PC-3 (cell line): ENCODE measurements at regions of chr15 and their contacts with region 1.

Region 1: DNA sequence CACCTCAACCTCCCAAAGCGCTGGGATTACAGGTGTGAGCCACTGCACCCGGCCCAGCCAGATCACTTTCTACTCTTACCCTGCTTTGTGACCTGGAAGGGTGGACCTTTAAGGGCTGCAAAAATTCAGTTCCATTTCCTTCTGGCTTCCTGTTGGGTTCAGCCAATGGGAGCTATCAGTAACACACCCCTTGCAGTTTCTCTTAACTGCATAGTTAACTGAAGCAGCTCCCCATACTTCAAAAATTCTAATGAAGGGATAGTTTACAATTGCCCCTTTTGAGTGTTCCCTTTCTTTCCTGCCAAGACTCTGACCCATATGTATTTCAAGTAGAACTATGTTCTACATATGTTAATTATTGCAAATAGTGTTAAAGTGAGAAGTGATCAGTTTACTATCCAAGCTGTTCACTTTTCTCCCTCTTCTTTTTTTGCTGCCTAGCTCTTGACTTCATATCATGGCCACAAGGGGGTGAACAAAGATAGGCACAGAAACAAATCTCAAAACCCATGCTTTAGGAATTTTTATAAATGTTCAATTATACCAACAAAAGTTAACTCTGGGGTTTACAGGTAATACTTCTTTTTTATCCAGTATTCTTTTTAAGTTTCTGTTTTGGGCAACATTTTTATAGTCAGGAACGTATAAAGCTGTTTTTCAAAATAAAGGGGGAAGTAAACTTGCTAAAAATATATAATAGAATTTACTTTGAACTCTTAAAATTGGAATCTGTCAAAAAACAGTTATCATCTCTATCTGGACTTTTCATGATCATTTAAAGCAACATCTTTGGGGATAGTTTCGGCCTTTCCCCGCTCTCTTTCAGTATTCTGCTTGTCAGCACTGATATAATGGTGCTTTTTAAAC is 8.1 kb downstream of the PGBD4 start:
- DNase-seq: peak; percentile 63
- ATAC-seq: peak; percentile 78
- H3K4me3 ChIP-seq: no peak overlapping the region
- H3K27ac ChIP-seq: no peak overlapping the region
- H3K4me1 ChIP-seq: no peaks in the 10 kb centered on the region
- H3K27me3 ChIP-seq: no peaks in the 10 kb centered on the region
- CTCF ChIP-seq: peak; percentile 90

Region 2: GRCh38 chr15:34056936-34057335 is 53.1 kb before region 1 on chr15:
- CTCF ChIA-PET with region 1: no interaction called
- POLR2A ChIA-PET with region 1: no interaction called
- intact Hi-C with region 1: loop called (anchors 1 kb)
- DNase-seq: no peak
- ATAC-seq: no peak
- H3K4me3 ChIP-seq: no peak overlapping the region
- H3K27ac ChIP-seq: no peak overlapping the region
- H3K4me1 ChIP-seq: no peaks in the 10 kb centered on the region
- H3K27me3 ChIP-seq: no peaks in the 10 kb centered on the region
- CTCF ChIP-seq: no peak

Region 3: DNA sequence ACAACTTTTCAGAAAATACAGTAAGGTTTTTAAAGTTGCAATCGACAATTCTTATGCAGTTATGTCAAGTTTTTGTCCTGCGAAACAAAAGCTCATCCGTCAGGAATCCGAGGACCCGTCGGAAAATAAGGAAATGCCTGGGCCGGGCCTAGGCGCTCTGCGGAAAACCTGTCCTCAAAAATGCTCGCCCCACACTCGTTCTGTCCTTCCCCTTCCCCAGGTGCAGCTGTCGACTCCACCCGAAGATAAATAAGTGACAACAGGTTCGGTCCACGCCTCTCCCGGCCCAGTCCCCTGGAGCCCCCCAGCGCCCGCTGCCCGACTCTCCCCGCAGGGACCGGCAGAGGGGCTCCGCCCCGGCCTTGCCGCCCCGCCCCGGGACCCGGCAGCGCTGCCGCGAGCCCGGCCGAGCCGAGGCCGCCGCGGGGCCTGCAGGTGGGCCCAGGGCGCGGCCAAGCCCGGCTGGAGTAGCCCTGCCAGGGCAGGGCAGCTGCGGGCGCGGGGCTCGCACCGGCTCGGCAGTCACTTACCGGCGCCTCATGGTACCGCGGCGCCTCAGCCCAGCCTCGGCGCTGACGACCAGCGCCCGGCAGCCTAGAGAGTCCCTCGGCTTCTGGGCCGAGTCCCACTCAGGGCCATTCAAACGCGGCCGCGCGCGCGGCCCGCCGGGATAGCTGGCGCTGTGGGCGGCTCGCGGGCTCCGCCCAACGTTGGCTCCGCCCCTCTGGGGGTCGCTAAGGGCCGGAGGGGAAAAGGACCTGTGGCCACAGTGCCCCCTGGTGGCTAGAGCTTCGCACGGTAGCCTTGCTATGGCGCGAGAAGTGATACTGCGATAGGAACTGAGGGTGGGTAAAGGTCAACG is 99.6 kb after region 1 on chr15 and contains the start of gene KATNBL1:
- CTCF ChIA-PET with region 1: interaction called, 17 read pairs
- POLR2A ChIA-PET with region 1: interaction called, 3 read pairs
- intact Hi-C with region 1: loop called (anchors 1 kb)
- DNase-seq: peak; percentile 99
- ATAC-seq: peak; percentile 90
- H3K4me3 ChIP-seq: peak within 1 kb of the TSS; percentile 92
- H3K27ac ChIP-seq: peak within 1 kb of the TSS; percentile 78
- H3K4me1 ChIP-seq: peaks cover 20% of the 10 kb centered on the region
- H3K27me3 ChIP-seq: no peaks in the 10 kb centered on the region
- CTCF ChIP-seq: peak; percentile 90
- total RNA-seq, gene KATNBL1: 51.6 and 57.6 TPM in 2 replicates

Region 4: GRCh38 chr15:34337557-34338306 is 227.7 kb after region 1 on chr15 and contains the start of gene SLC12A6:
- CTCF ChIA-PET with region 1: interaction called, 5 read pairs
- POLR2A ChIA-PET with region 1: interaction called, 22 read pairs
- intact Hi-C with region 1: loop called (anchors 1 kb)
- DNase-seq: peak; percentile 95
- ATAC-seq: peak; percentile 82
- H3K4me3 ChIP-seq: peak within 1 kb of the TSS; percentile 90
- H3K27ac ChIP-seq: peak within 1 kb of the TSS; percentile 93
- H3K4me1 ChIP-seq: peaks cover 68% of the 10 kb centered on the region
- H3K27me3 ChIP-seq: no peaks in the 10 kb centered on the region
- CTCF ChIP-seq: no peak
- total RNA-seq, gene SLC12A6: 22.9 TPM in 2 replicates

Region 5: DNA sequence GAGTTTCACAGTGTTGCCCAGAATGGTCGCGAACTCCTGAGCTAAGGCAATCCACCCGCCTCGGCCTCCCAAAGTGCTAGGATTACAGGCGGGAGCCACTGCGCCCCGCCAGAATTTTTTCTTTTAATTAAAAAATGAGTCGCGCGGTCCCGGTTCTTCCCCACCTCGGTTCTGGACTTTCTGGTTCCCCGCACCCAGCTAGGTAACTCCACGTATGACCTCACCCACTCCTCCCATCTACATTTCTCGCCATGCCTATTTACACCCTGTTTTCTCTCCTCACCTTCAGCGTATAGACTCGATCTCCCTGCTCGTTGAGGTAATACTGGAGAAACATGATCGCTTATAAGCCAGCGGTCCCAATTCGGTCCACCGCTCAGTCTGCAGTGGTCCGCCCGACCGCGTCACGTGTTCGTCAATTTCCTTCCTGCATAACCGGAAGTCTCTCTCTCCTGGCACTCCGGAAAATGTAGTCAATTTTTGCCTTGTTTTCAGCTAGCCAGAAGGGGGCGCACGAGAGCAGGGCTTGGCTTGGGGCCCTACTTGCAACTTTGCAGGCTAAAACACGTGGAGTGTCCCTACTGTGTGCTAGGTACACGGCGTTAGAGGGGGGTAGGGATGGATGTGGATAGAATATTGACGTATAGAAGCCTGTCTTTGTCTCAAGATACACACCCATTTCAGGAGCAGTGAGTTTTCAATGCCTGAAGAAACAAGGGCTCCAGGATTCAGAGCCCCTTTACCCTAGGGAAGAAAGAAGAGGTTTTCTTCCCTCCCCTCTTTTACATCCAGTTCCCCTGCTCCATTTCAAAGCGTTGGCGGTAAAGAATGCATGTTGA is 232.9 kb after region 1 on chr15 and contains the starts of genes NOP10 and NUTM1:
- CTCF ChIA-PET with region 1: interaction called, 5 read pairs
- POLR2A ChIA-PET with region 1: interaction called, 22 read pairs
- intact Hi-C with region 1: loop called (anchors 1 kb)
- DNase-seq: peak; percentile 91
- ATAC-seq: peak; percentile 75
- H3K4me3 ChIP-seq: peak within 1 kb of the TSS; percentile 85
- H3K27ac ChIP-seq: peak within 1 kb of the TSS; percentile 88
- H3K4me1 ChIP-seq: peaks cover 29% of the 10 kb centered on the region
- H3K27me3 ChIP-seq: no peaks in the 10 kb centered on the region
- CTCF ChIP-seq: peak; percentile 93
- total RNA-seq, gene NOP10: 291 and 323 TPM in 2 replicates
- total RNA-seq, gene NUTM1: 0.04 TPM in 1 of 2 replicates, not detected in the other

Region 6: DNA sequence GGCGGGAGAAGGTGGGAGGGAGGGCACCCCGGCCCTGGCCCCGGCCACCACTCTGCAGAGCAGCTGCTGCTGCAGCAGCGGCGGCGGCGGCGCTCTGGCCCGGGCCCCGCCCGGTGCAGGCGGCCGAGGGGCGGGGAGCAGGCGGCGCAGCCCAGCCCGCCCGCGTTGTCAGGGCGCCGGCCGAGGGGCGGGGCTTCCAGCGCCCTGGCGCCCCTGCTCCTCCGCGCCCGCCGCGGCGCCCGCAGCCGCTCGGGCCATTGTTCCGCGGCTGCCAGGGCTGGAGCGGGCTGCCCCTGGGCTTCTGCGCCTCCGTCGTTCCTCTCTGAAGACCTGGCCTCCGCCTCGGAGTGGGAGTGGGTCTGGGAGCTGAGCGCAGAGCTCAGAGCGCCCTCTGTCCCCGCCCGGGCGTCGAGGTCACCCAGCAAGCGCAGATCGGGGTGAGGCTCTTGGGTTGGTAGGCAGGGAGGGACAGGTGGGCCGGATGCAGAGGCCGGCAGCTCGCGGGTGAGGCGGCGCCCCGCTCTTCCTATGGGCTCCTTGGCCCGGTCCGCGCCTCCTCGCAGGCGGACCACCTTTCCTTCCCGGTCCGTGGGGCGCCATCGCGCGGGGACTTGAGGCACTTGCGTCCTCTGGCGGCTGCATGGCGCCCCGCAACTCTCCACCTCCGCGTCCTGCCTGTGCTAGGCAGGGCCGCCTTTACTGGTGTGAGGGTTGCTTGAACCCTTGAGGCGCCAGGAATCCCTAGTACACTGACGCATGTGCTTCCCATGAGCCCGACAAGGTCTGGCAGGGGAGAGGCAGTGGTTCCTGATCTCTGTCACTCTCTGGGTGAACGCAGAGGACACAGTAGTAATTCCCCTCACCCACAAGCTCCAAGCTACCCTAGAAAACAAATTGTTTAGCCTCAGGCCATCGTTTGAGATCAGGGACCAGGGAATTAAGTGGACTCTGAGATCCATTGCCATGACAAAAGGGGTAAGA is 257.4 kb after region 1 on chr15 and contains the start of gene LPCAT4:
- CTCF ChIA-PET with region 1: interaction called, 11 read pairs
- POLR2A ChIA-PET with region 1: no interaction called
- intact Hi-C with region 1: loop called (anchors 1 kb)
- DNase-seq: peak; percentile 90
- ATAC-seq: peak; percentile 79
- H3K4me3 ChIP-seq: peak within 1 kb of the TSS; percentile 100
- H3K27ac ChIP-seq: peak within 1 kb of the TSS; percentile 99
- H3K4me1 ChIP-seq: peaks cover 41% of the 10 kb centered on the region; the same call in 1 of the 2 replicates
- H3K27me3 ChIP-seq: no peaks in the 10 kb centered on the region
- CTCF ChIP-seq: peak; percentile 94
- total RNA-seq, gene LPCAT4: 37.0 and 38.2 TPM in 2 replicates

Region 7: GRCh38 chr15:34587717-34588674 is 478.0 kb after region 1 on chr15:
- CTCF ChIA-PET with region 1: interaction called, 8 read pairs
- POLR2A ChIA-PET with region 1: no interaction called
- intact Hi-C with region 1: loop called (anchors 1 kb)
- DNase-seq: peak; percentile 80
- ATAC-seq: peak; percentile 64
- H3K4me3 ChIP-seq: peak overlapping the region; percentile 58
- H3K27ac ChIP-seq: no peak overlapping the region
- H3K4me1 ChIP-seq: peaks cover 6% of the 10 kb centered on the region; the same call in 1 of the 2 replicates
- H3K27me3 ChIP-seq: no peaks in the 10 kb centered on the region
- CTCF ChIP-seq: peak; percentile 91